GM12878 (cell line): ENCODE measurements at regions of chr15 and their contacts with region 1.

Region 1: GRCh38 chr15:81106560-81106959 is 27.5 kb upstream of the CFAP161 start:
- DNase-seq: peak; percentile 8
- ATAC-seq: peak; percentile 65
- H3K4me3 ChIP-seq: no peak overlapping the region
- H3K27ac ChIP-seq: no peak overlapping the region
- H3K4me1 ChIP-seq: peaks cover 7% of the 10 kb centered on the region
- H3K27me3 ChIP-seq: no peaks in the 10 kb centered on the region
- CTCF ChIP-seq: peak; percentile 75 to 83 (median 76)
- EP300 ChIP-seq: no peak
- POLR2A ChIP-seq: no peak
- RAD21 ChIP-seq: peak; percentile 89

Region 2: GRCh38 chr15:80455668-80456442 is 650.7 kb before region 1 on chr15:
- CTCF ChIA-PET with region 1: interaction called, 3 read pairs
- POLR2A ChIA-PET with region 1: no interaction called
- RAD21 ChIA-PET with region 1: no interaction called
- SMC1A ChIA-PET with region 1: no interaction called
- in situ Hi-C with region 1: loop called (anchors 10 kb)
- intact Hi-C with region 1: no loop called
- DNase-seq: peak; percentile 16
- ATAC-seq: peak; percentile 88
- H3K4me3 ChIP-seq: no peak overlapping the region
- H3K27ac ChIP-seq: no peak overlapping the region
- H3K4me1 ChIP-seq: no peaks in the 10 kb centered on the region
- H3K27me3 ChIP-seq: no peaks in the 10 kb centered on the region; a peak in 3 of 4 replicates
- CTCF ChIP-seq: peak; percentile 90 to 98 (median 97); a peak in 5 of 6 replicates
- EP300 ChIP-seq: no peak
- POLR2A ChIP-seq: no peak
- RAD21 ChIP-seq: peak; percentile 96

Region 3: GRCh38 chr15:80835338-80835737 is 271.2 kb before region 1 on chr15:
- CTCF ChIA-PET with region 1: no interaction called
- POLR2A ChIA-PET with region 1: no interaction called
- RAD21 ChIA-PET with region 1: no interaction called
- SMC1A ChIA-PET with region 1: no interaction called
- in situ Hi-C with region 1: no loop called
- intact Hi-C with region 1: no loop called
- DNase-seq: no peak
- ATAC-seq: no peak
- H3K4me3 ChIP-seq: no peak overlapping the region
- H3K27ac ChIP-seq: no peak overlapping the region
- H3K4me1 ChIP-seq: no peaks in the 10 kb centered on the region
- H3K27me3 ChIP-seq: peaks cover 1 to 3% of the 10 kb centered on the region in 2 experiments; a peak in 3 of 4 replicates
- CTCF ChIP-seq: no peak
- EP300 ChIP-seq: no peak
- POLR2A ChIP-seq: no peak
- RAD21 ChIP-seq: no peak

Region 4: DNA sequence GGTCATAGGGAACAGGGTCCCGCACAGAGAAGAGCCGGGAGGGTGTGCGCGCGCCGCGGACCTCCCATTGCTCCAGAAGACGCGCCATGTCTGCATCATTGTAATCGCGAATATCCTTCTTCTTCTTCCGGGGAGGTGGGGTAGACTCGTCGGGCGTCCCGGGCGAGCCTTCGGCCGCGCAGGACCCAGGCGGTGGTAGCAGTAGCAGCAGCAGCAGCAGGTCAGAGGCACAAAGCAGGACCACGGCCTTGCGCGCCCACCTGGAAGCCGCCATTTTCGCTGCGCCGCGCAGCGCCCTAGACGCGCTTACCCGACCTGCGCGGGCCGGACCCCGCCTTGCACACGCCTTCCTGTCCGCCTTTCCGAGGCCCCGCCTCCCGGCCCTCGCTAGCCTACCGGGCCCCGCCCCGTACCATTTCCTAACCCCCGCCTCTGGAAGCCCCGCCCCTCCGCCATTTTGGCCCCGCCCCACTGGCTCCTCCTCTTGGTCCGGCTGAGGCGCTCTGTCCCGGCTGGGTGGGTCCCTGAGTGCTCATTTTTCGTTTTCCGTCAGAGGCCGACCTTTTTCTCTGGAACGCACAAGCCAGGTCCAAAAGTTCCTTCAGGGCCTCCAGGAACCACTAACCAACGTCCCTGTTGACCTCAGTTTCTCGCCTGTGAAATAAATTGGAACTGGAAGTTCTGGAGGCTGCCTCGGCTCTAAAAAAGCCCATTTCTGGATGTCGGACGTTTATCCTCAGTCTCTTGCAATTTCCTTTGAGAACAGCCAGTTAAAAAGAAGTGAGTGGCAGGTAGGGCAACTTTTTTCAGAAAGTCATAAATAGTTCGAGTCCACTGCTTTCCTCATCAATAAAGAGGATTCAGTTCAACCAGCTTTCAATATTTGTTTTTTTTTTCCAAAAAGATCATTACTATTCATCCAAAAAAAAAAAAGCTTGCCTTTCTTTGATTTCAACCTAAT is 116.8 kb before region 1 on chr15 and contains the start of gene MESD:
- CTCF ChIA-PET with region 1: interaction called, 8 read pairs
- POLR2A ChIA-PET with region 1: no interaction called
- RAD21 ChIA-PET with region 1: no interaction called
- SMC1A ChIA-PET with region 1: interaction called, 9 read pairs
- in situ Hi-C with region 1: loop called (anchors 5 kb)
- intact Hi-C with region 1: no loop called
- DNase-seq: peak; percentile 70
- ATAC-seq: peak; percentile 97
- H3K4me3 ChIP-seq: peak within 1 kb of the TSS; percentile 94
- H3K27ac ChIP-seq: peak within 1 kb of the TSS; percentile 80
- H3K4me1 ChIP-seq: peaks cover 4% of the 10 kb centered on the region
- H3K27me3 ChIP-seq: no peaks in the 10 kb centered on the region
- CTCF ChIP-seq: no peak
- EP300 ChIP-seq: no peak
- POLR2A ChIP-seq: peak; percentile 99
- RAD21 ChIP-seq: no peak
- polyA plus RNA-seq, gene MESD: 10.2 to 16.7 TPM

Region 5: GRCh38 chr15:81000624-81001151 is 105.9 kb before region 1 on chr15 and contains the start of gene TLNRD1:
- CTCF ChIA-PET with region 1: interaction called, 14 read pairs
- POLR2A ChIA-PET with region 1: no interaction called
- RAD21 ChIA-PET with region 1: interaction called, 4 read pairs
- SMC1A ChIA-PET with region 1: interaction called, 4 read pairs
- in situ Hi-C with region 1: no loop called
- intact Hi-C with region 1: loop called (anchors 1 kb)
- DNase-seq: no peak
- ATAC-seq: peak; percentile 74
- H3K4me3 ChIP-seq: peak within 1 kb of the TSS; percentile 87
- H3K27ac ChIP-seq: peak within 1 kb of the TSS; percentile 92
- H3K4me1 ChIP-seq: peaks cover 19% of the 10 kb centered on the region
- H3K27me3 ChIP-seq: no peaks in the 10 kb centered on the region
- CTCF ChIP-seq: no peak
- EP300 ChIP-seq: no peak
- POLR2A ChIP-seq: peak; percentile 92
- RAD21 ChIP-seq: no peak
- polyA plus RNA-seq, gene TLNRD1: 2.5 to 5.7 TPM

Region 6: DNA sequence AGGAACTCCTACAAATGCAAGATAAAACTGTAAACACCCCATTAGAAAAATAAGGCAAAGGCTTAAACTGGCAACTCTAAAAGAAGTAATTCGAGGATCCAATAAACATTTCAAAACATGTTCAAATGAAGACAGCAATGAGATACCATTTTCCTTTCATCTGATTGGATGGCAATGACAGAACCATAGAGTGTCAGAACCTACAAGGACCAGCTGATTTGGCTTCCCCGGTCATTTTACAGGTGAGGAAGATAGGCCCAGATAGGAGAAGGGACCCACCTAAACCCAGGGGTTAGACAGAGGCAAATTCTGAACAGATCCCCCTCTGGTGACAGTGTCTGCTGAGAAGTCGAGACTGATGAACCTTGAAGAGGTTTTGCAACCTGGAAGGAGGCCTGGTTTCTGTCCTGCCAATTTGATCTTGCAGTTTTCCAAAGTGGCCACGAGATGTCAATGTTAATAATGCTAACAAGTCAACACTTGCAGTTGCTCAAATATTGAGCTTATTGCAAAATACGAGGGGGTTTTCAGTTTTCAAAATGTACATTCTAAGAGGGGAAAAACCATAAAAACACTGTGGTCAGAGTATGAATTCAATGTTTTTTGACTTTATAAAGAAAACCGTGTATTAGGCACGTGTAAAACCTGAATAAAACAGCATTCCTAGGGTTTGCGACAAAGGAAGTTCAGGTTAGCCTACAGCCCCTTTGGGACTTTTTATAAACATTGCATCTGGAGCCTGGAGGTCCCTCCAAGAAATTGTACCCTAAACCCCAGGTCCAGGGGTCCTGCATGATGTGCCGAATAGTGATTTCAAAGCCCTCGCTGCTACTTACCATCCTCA is 49.0 kb after region 1 on chr15:
- CTCF ChIA-PET with region 1: interaction called, 13 read pairs
- POLR2A ChIA-PET with region 1: no interaction called
- RAD21 ChIA-PET with region 1: interaction called, 5 read pairs
- SMC1A ChIA-PET with region 1: interaction called, 6 read pairs
- in situ Hi-C with region 1: no loop called
- intact Hi-C with region 1: loop called (anchors 2 kb)
- DNase-seq: no peak
- ATAC-seq: peak; percentile 76
- H3K4me3 ChIP-seq: no peak overlapping the region
- H3K27ac ChIP-seq: no peak overlapping the region
- H3K4me1 ChIP-seq: no peaks in the 10 kb centered on the region
- H3K27me3 ChIP-seq: peaks cover 0 to 2% of the 10 kb centered on the region in 2 experiments; a peak in 1 of 4 replicates
- CTCF ChIP-seq: peak; percentile 55 to 63 (median 58); a peak in 5 of 6 replicates
- EP300 ChIP-seq: no peak
- POLR2A ChIP-seq: no peak
- RAD21 ChIP-seq: peak; percentile 66

Region 7: DNA sequence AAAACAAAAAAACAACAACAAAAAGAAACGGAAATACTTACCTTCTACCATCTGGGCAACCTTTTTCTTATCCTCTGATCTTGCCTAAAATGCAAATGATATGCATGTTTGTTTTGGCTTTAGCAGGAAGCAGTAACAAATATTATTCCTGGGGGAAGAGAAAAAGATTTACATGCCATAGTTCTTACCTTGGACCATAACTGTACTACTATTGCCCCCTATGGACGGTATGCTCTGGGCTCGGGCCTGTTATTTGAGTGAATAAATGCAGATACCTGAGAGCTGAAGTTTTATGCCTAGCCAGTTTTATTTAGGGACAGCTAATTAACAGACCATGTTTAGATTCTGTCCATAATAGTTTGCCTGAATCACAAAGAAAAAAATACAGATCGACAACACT is 230.0 kb after region 1 on chr15:
- CTCF ChIA-PET with region 1: interaction called, 12 read pairs
- POLR2A ChIA-PET with region 1: no interaction called
- RAD21 ChIA-PET with region 1: interaction called, 5 read pairs
- SMC1A ChIA-PET with region 1: no interaction called
- in situ Hi-C with region 1: no loop called
- intact Hi-C with region 1: no loop called
- DNase-seq: no peak
- ATAC-seq: peak; percentile 89
- H3K4me3 ChIP-seq: no peak overlapping the region
- H3K27ac ChIP-seq: no peak overlapping the region
- H3K4me1 ChIP-seq: no peaks in the 10 kb centered on the region; the same call in 1 of the 2 replicates
- H3K27me3 ChIP-seq: no peaks in the 10 kb centered on the region
- CTCF ChIP-seq: peak; percentile 57 to 73 (median 66); a peak in 5 of 6 replicates
- EP300 ChIP-seq: no peak
- POLR2A ChIP-seq: no peak
- RAD21 ChIP-seq: peak; percentile 83

Region 8: GRCh38 chr15:81388436-81388770 is 281.8 kb after region 1 on chr15:
- CTCF ChIA-PET with region 1: no interaction called
- POLR2A ChIA-PET with region 1: no interaction called
- RAD21 ChIA-PET with region 1: no interaction called
- SMC1A ChIA-PET with region 1: no interaction called
- in situ Hi-C with region 1: no loop called
- intact Hi-C with region 1: no loop called
- DNase-seq: no peak
- ATAC-seq: no peak
- H3K4me3 ChIP-seq: no peak overlapping the region
- H3K27ac ChIP-seq: no peak overlapping the region
- H3K4me1 ChIP-seq: no peaks in the 10 kb centered on the region
- H3K27me3 ChIP-seq: no peaks in the 10 kb centered on the region
- CTCF ChIP-seq: no peak
- EP300 ChIP-seq: no peak
- POLR2A ChIP-seq: no peak
- RAD21 ChIP-seq: no peak

Region 9: DNA sequence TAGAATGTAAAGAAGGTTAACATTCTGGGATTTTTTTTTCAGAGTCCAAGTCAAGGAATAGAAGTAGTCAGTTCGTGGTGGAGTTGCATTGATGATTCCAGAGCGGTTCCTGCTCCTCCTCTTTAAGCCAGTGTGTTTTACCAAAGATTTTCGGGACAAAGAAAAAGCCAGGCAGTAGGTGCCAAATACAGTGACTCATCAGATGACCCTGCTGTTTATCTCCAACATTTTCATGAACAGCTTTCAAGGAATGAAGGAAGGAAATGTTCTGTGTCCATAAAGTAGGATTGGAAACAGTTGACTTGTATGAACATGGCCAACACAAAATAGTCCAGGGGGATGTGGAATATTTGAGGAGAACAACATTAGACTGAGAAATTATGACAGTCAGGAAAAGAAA is 409.9 kb after region 1 on chr15:
- CTCF ChIA-PET with region 1: no interaction called
- POLR2A ChIA-PET with region 1: no interaction called
- RAD21 ChIA-PET with region 1: no interaction called
- SMC1A ChIA-PET with region 1: no interaction called
- in situ Hi-C with region 1: no loop called
- intact Hi-C with region 1: no loop called
- DNase-seq: no peak
- ATAC-seq: no peak
- H3K4me3 ChIP-seq: no peak overlapping the region
- H3K27ac ChIP-seq: no peak overlapping the region
- H3K4me1 ChIP-seq: no peaks in the 10 kb centered on the region
- H3K27me3 ChIP-seq: no peaks in the 10 kb centered on the region; a peak in 2 of 4 replicates
- CTCF ChIP-seq: no peak
- EP300 ChIP-seq: no peak
- POLR2A ChIP-seq: no peak
- RAD21 ChIP-seq: no peak